K562 (cell line): ENCODE measurements at regions of chr7 and their contacts with region 1.

Region 1: GRCh38 chr7:41696314-41696916 is 6.5 kb downstream of the INHBA start:
- DNase-seq: peak; percentile 43 to 67 (median 48)
- ATAC-seq: peak; percentile 95
- H3K4me3 ChIP-seq: no peak overlapping the region
- H3K27ac ChIP-seq: no peak overlapping the region
- H3K4me1 ChIP-seq: no peaks in the 10 kb centered on the region
- H3K27me3 ChIP-seq: no peaks in the 10 kb centered on the region; a peak in 1 of 5 replicates
- CTCF ChIP-seq: peak; percentile 47 to 63 (median 59)
- EP300 ChIP-seq: no peak
- POLR2A ChIP-seq: no peak
- RAD21 ChIP-seq: peak; percentile 48 to 58

Region 2: GRCh38 chr7:40232242-40232893 is 1464.0 kb before region 1 on chr7:
- CTCF ChIA-PET with region 1: no interaction called
- POLR2A ChIA-PET with region 1: no interaction called
- in situ Hi-C with region 1: no loop called
- intact Hi-C with region 1: loop called (anchors 2 kb)
- DNase-seq: peak in 2 of 4 experiments; percentile 20 to 50
- ATAC-seq: peak; percentile 78
- H3K4me3 ChIP-seq: no peak overlapping the region
- H3K27ac ChIP-seq: no peak overlapping the region
- H3K4me1 ChIP-seq: no peaks in the 10 kb centered on the region
- H3K27me3 ChIP-seq: no peaks in the 10 kb centered on the region
- CTCF ChIP-seq: peak; percentile 49 to 70 (median 58); a peak in 5 of 6 replicates
- EP300 ChIP-seq: no peak
- POLR2A ChIP-seq: no peak
- RAD21 ChIP-seq: peak; percentile 48 to 70

Region 3: DNA sequence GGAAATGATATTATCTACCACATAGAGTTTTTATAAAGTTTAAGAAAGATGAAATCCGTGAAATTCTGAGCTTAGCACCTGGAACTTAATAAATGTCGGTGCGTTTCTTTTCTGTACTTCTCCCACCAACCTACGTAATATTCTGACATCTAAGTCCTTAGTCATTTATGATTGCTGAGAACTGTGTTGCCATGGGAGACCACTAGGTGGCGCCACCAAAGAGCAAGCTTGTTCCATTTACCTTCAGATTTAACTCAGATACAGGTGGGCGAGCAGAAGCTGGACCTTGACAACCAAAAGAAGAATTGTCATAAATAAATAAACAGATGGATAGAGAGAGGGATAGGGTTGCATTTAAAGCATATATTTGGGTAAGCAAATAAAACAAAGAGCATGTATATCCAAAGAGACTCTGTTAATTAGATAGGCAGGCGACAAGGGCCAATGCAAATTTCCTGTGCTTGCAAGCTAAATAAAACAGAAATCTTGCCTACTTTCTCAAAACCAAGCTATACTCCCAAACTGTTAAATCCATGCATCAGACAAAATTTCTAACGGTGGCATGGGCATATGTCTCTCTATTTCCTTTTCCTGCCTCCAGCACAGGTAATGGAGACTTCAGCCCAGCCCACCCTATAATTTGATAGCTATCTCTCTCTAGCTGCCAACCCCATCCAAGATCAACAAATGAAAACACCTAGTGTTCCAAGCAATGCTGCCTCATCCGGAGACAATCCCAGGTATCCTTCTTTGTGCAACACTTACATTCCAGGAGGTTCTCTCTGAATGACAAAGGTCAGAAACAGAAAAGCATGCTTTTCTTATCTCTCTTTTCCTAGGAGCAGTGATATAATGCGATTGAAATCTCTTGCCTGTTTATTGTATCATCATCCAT is 693.1 kb before region 1 on chr7:
- CTCF ChIA-PET with region 1: no interaction called
- POLR2A ChIA-PET with region 1: no interaction called
- in situ Hi-C with region 1: no loop called
- intact Hi-C with region 1: loop called (anchors 10 kb)
- DNase-seq: peak; percentile 18 to 57 (median 43)
- ATAC-seq: peak; percentile 53; the same call in 1 of the 3 replicates
- H3K4me3 ChIP-seq: no peak overlapping the region
- H3K27ac ChIP-seq: no peak overlapping the region
- H3K4me1 ChIP-seq: no peaks in the 10 kb centered on the region
- H3K27me3 ChIP-seq: no peaks in the 10 kb centered on the region
- CTCF ChIP-seq: peak; percentile 47 to 70 (median 62); a peak in 5 of 6 replicates
- EP300 ChIP-seq: no peak
- POLR2A ChIP-seq: no peak
- RAD21 ChIP-seq: peak; percentile 39 to 57